CD4-positive, alpha-beta memory T cell (primary cell): ENCODE measurements at regions of chr6 and their contacts with region 1.

Region 1: DNA sequence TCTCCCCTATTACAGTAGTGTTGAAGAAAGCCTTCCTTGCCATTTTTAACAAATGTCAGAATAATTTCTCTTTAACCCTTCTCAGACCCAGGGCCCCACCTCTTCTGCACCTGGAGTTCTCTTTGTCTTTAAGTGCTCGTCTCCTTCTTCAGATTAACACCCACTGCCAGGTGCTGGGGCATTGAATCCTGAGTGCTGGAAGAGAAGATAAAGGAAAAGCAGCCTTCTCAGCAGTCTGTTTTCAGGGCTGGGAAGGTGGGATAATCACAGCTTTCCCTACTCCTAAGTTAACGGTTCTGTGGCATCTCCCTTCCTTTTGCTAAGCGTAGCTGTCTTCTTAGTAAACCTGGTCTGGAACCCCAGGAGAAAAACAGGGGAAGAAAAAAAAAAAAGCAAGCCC is 114.5 kb upstream of the TAB2 start:
- DNase-seq: no peak
- H3K4me3 ChIP-seq: no peak overlapping the region
- H3K4me3 Mint-ChIP-seq: peak overlapping the region in 1 of 8 donors; percentile 3
- H3K27ac ChIP-seq: no peak overlapping the region
- H3K27ac Mint-ChIP-seq: peak overlapping the region in 1 of 7 donors; percentile 35
- H3K4me1 ChIP-seq: peaks cover 9% of the 10 kb centered on the region
- H3K4me1 Mint-ChIP-seq: peaks cover 0 to 7% (median 3%) of the 10 kb centered on the region in 4 donors
- H3K27me3 ChIP-seq: no peaks in the 10 kb centered on the region
- H3K27me3 Mint-ChIP-seq: no peaks in the 10 kb centered on the region

Region 2: DNA sequence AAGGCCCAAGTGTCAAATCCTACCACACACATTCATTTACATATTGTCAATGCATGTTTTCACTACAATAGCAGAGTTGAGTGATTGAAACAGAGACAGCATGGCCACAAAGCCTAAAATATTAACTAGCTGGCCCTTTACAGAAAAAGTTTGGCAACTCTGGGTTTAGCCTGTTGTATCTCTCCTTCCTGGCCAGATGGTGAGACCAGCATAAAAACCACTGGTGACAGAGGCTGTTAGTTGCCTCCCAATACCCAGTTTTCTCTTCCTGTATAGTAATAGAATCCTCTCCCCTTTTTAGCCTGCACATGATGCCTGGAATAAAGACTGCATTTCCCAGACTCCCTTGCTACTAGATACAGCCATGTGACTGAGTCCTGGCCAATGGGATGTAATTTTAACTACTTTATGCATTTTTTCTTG is 14.5 kb after region 1 on chr6:
- CTCF ChIA-PET with region 1: no interaction called
- POLR2A ChIA-PET with region 1: interaction called, 21 read pairs
- intact Hi-C with region 1: loop called (anchors 2 kb)
- DNase-seq: peak in 1 of 5 donors; percentile 11
- H3K4me3 ChIP-seq: no peak overlapping the region
- H3K4me3 Mint-ChIP-seq: no peak overlapping the region
- H3K27ac ChIP-seq: no peak overlapping the region
- H3K27ac Mint-ChIP-seq: peak overlapping the region in 3 of 7 donors; percentile 1 to 13 (median 12)
- H3K4me1 ChIP-seq: peaks cover 24% of the 10 kb centered on the region
- H3K4me1 Mint-ChIP-seq: peaks cover 7 to 25% (median 17%) of the 10 kb centered on the region in 4 donors
- H3K27me3 ChIP-seq: no peaks in the 10 kb centered on the region
- H3K27me3 Mint-ChIP-seq: no peaks in the 10 kb centered on the region

Region 3: GRCh38 chr6:149306967-149307366 is 104.0 kb after region 1 on chr6:
- CTCF ChIA-PET with region 1: no interaction called
- POLR2A ChIA-PET with region 1: no interaction called
- intact Hi-C with region 1: no loop called
- DNase-seq: no peak
- H3K4me3 ChIP-seq: no peak overlapping the region
- H3K4me3 Mint-ChIP-seq: no peak overlapping the region
- H3K27ac ChIP-seq: no peak overlapping the region
- H3K27ac Mint-ChIP-seq: no peak overlapping the region
- H3K4me1 ChIP-seq: no peaks in the 10 kb centered on the region
- H3K4me1 Mint-ChIP-seq: peaks cover 0 to 1% (median 0%) of the 10 kb centered on the region in 4 donors
- H3K27me3 ChIP-seq: no peaks in the 10 kb centered on the region
- H3K27me3 Mint-ChIP-seq: no peaks in the 10 kb centered on the region

Region 4: DNA sequence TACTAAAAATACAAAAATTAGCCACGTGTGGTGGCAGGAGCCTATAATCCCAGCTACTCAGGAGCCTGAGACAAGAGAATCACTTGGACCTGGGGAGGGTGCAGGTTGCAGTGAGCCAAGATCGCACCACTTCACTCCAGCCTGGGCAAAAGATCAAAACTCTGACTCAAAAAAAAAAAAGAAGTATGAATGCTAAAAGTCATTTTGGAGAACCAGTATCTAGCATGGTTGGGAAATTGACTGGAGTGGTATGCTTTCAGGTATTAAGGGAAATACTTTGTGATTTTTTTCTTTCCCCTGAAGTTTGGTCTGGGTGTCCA is 576.6 kb after region 1 on chr6:
- CTCF ChIA-PET with region 1: no interaction called
- POLR2A ChIA-PET with region 1: no interaction called
- intact Hi-C with region 1: no loop called
- DNase-seq: no peak
- H3K4me3 ChIP-seq: no peak overlapping the region
- H3K4me3 Mint-ChIP-seq: no peak overlapping the region
- H3K27ac ChIP-seq: no peak overlapping the region
- H3K27ac Mint-ChIP-seq: no peak overlapping the region
- H3K4me1 ChIP-seq: no peaks in the 10 kb centered on the region
- H3K4me1 Mint-ChIP-seq: peaks cover 0 to 4% (median under 1%) of the 10 kb centered on the region in 4 donors
- H3K27me3 ChIP-seq: no peaks in the 10 kb centered on the region
- H3K27me3 Mint-ChIP-seq: no peaks in the 10 kb centered on the region